ENCODE measurements at regions of chr19 and their contacts with region 1.

Region 1: GRCh38 chr19:47130591-47131227 is at the start of gene SAE1:
- DNase-seq: peak; percentile 98
- H3K4me3 ChIP-seq: peak within 1 kb of the TSS; percentile 71 to 91 (median 81)
- H3K27ac ChIP-seq: peak within 1 kb of the TSS; percentile 92 to 98 (median 96)
- H3K4me1 ChIP-seq: peaks cover 0 to 44% (median 41%) of the 10 kb centered on the region in 4 donors
- H3K27me3 ChIP-seq: no peaks in the 10 kb centered on the region
- CTCF ChIP-seq: peak in 3 of 4 experiments; percentile 17 to 50 (median 36)
- EP300 ChIP-seq: peak in 1 of 4 donors; percentile 67
- POLR2A ChIP-seq: peak; percentile 75 to 84
- total RNA-seq, gene SAE1: 109 to 191 (median 161) TPM

Region 2: DNA sequence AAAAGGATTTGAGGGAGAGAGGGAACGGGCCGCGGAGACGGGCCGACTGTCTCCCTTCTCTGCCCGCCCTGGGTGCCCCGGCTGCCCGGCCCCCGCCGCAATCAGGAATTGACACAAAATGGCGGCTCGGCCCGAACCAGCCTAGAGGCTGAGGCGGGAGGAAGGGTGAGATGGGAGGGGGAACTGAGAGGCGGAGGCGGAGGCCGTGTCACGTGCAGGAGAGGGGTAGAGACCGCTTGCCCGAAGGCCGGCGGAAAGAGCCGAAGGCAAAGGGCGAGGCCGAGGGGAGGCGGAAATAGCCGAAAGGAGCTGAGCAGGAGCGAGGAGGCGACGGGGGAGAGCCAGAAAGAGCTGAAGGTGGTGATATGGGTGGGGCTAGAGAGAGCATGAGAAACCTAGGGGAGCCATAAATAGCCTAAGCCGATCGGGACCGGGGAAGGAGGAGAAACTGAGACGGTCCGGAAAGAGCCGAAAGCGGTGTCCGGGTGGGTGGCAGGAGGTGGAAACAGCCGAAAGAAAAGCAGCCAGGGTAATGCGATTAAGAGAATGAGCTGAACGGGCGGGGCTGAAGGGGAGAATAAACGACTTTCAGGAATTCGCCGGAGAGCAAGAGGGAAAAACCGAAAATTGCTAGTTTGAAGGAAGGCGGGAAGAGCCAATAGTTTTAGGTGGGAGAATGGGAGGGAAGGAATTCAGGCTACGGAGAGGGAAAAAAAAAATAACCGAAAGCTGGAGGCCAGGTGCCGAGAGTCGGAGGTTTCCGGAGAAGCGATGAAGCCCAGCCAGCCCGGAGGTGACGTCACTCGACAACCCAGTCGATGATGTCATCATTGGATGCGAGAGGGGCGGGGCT is 17.5 kb before region 1 on chr19 and contains the start of gene ZC3H4:
- intact Hi-C with region 1: loop called (anchors 1 kb)
- DNase-seq: peak; percentile 100
- H3K4me3 ChIP-seq: peak within 1 kb of the TSS; percentile 78 to 98 (median 97)
- H3K27ac ChIP-seq: peak within 1 kb of the TSS; percentile 97 to 100 (median 100)
- H3K4me1 ChIP-seq: peaks cover 0 to 28% (median 27%) of the 10 kb centered on the region in 4 donors
- H3K27me3 ChIP-seq: no peaks in the 10 kb centered on the region
- CTCF ChIP-seq: no peak
- EP300 ChIP-seq: peak in 1 of 4 donors; percentile 73
- POLR2A ChIP-seq: peak; percentile 69 to 74
- total RNA-seq, gene ZC3H4: 19.3 to 25.3 (median 21.8) TPM

Region 3: DNA sequence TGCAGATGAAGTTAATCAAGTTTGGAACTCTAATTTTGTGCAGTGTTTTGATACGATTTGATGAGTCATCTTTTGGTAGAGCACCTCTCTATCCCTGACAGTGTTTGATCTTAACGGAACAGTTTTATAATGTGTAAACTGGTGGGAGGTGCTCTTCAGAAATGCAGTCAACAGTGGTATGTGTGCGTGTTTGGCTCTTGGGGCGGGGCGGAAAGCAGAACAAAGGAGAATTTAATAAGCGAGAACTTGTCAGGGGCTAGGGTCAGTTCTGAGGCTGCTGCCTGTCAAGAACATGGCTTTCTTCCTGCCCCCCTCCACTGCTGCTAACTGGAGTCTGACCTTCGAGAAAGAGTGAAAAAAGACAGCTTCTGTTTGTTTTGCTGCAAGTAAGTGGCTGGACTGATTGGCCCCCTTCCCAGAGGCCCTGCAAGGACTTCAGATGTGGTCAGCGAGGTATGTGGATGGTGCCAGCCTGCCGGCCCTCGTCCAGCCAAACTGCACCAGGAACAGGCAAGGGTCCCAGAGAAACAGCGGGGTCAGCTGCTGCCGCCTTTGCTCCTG is 59.5 kb after region 1 on chr19:
- intact Hi-C with region 1: no loop called
- DNase-seq: peak; percentile 76
- H3K4me3 ChIP-seq: peak overlapping the region in 1 of 4 donors; percentile 12
- H3K27ac ChIP-seq: peak overlapping the region; percentile 77 to 83 (median 80)
- H3K4me1 ChIP-seq: peaks cover 0 to 59% (median 51%) of the 10 kb centered on the region in 4 donors
- H3K27me3 ChIP-seq: no peaks in the 10 kb centered on the region
- CTCF ChIP-seq: no peak
- EP300 ChIP-seq: no peak
- POLR2A ChIP-seq: no peak

Measured in sigmoid colon (tissue), 7 donors.